CD8-positive, alpha-beta T cell (primary cell): ENCODE measurements at regions of chr17 and their contacts with region 1.

Region 1: GRCh38 chr17:20226814-20227482 is 217.8 kb downstream of the SPECC1 start:
- DNase-seq: peak; percentile 61 to 88 (median 78)
- ATAC-seq: peak; percentile 93
- H3K4me3 ChIP-seq: no peak overlapping the region
- H3K4me3 Mint-ChIP-seq: no peak overlapping the region
- H3K27ac ChIP-seq: no peak overlapping the region
- H3K27ac Mint-ChIP-seq: no peak overlapping the region
- H3K4me1 ChIP-seq: peaks cover 8% of the 10 kb centered on the region
- H3K4me1 Mint-ChIP-seq: peaks cover 15% of the 10 kb centered on the region
- H3K27me3 ChIP-seq: no peaks in the 10 kb centered on the region
- H3K27me3 Mint-ChIP-seq: peaks cover 5% of the 10 kb centered on the region
- CTCF ChIP-seq: peak; percentile 71

Region 2: DNA sequence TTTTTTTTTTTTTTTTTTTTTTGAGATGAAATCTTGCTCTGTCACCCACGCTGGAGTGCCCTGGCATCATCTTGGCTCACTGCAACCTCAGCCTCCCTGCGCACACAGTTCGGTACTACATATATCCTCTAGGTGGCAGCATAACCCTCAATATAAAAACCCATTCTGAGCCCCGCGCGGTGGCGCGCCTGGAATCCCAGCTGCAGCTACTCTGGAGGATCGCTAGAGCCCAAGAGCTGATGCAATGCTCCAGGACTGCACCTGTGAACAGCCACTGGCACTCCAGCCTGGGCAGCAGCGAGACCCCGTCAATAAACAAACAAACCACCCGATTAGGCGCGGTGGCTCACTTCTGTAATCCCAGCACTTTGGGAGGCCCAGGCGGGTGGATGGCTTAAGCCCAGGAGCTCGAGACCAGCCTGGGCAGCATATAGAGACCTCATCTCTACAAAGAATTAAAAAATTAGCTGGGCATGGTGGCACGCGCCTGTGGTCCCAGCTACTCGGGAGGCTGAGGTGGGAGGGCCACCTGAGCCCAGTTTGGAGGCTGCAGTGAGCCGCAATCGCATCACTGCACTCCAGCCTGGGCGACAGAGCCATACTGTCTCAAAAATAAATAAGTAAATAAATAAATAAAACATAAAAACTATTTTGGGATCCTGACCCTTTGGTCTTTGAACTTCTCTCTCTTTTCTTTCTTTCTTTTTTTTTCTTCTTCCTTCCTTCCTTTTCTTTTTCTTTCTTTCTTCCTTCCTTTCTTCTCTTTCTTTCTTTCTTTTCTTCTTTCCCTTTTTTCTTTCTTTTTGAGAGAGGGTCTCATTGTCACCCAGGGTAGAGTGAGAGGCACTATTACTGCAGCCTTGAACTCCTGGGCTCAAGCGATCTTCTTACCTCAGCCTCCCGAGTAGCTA is 233.9 kb before region 1 on chr17:
- CTCF ChIA-PET with region 1: interaction called, 5 read pairs
- POLR2A ChIA-PET with region 1: no interaction called
- intact Hi-C with region 1: loop called (anchors 5 to 10 kb)
- DNase-seq: peak; percentile 39 to 87 (median 76)
- ATAC-seq: peak; percentile 99
- H3K4me3 ChIP-seq: no peak overlapping the region
- H3K4me3 Mint-ChIP-seq: no peak overlapping the region
- H3K27ac ChIP-seq: no peak overlapping the region
- H3K27ac Mint-ChIP-seq: no peak overlapping the region
- H3K4me1 ChIP-seq: peaks cover 3% of the 10 kb centered on the region
- H3K4me1 Mint-ChIP-seq: peaks cover 4% of the 10 kb centered on the region
- H3K27me3 ChIP-seq: no peaks in the 10 kb centered on the region
- H3K27me3 Mint-ChIP-seq: peaks cover 5% of the 10 kb centered on the region
- CTCF ChIP-seq: peak; percentile 59

Region 3: GRCh38 chr17:20121359-20122253 is 105.3 kb before region 1 on chr17:
- CTCF ChIA-PET with region 1: interaction called, 52 read pairs
- POLR2A ChIA-PET with region 1: no interaction called
- intact Hi-C with region 1: loop called (anchors 1 kb)
- DNase-seq: peak; percentile 36 to 81 (median 71)
- ATAC-seq: peak; percentile 68
- H3K4me3 ChIP-seq: no peak overlapping the region
- H3K4me3 Mint-ChIP-seq: no peak overlapping the region
- H3K27ac ChIP-seq: no peak overlapping the region
- H3K27ac Mint-ChIP-seq: no peak overlapping the region
- H3K4me1 ChIP-seq: no peaks in the 10 kb centered on the region
- H3K4me1 Mint-ChIP-seq: peaks cover 2% of the 10 kb centered on the region
- H3K27me3 ChIP-seq: no peaks in the 10 kb centered on the region
- H3K27me3 Mint-ChIP-seq: peaks cover 2% of the 10 kb centered on the region
- CTCF ChIP-seq: peak; percentile 82

Region 4: GRCh38 chr17:20244671-20245070 is 17.7 kb after region 1 on chr17:
- CTCF ChIA-PET with region 1: interaction called, 15 read pairs
- POLR2A ChIA-PET with region 1: no interaction called
- intact Hi-C with region 1: no loop called
- DNase-seq: no peak
- ATAC-seq: no peak
- H3K4me3 ChIP-seq: no peak overlapping the region
- H3K4me3 Mint-ChIP-seq: no peak overlapping the region
- H3K27ac ChIP-seq: no peak overlapping the region
- H3K27ac Mint-ChIP-seq: no peak overlapping the region
- H3K4me1 ChIP-seq: peaks cover 30% of the 10 kb centered on the region
- H3K4me1 Mint-ChIP-seq: peaks cover 33% of the 10 kb centered on the region
- H3K27me3 ChIP-seq: no peaks in the 10 kb centered on the region
- H3K27me3 Mint-ChIP-seq: no peaks in the 10 kb centered on the region
- CTCF ChIP-seq: no peak

Region 5: DNA sequence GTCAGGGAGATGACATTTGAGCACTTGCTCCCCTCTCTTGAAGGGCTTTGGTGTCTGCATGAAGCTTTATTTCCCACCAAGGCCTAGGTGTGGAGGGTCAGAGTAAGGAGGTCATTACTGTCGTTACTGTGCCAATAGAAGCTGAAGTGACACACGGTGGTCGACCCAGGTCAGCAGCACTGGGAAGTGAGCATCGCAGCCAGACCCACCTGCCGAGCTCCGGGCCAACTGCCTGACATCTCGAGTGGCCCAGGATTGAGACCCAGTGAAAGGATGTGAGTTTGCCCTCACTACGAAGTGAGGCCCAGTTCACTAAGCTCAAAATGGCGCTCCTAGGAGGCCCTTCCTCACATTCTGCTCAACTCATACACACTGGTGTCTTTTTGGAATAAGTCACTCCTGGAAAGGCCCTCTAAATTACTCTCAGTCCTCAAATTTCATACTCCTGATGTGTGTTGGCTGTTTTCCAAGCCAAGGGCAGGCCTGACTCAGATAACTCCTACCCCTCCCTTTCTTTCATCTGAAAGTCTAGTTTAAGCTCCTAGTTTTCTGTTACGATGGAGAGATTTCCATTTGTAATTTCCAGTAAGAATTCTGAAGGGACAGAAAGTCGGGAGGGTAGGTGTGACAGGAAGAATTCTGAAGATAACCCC is 40.0 kb after region 1 on chr17:
- CTCF ChIA-PET with region 1: interaction called, 14 read pairs
- POLR2A ChIA-PET with region 1: no interaction called
- intact Hi-C with region 1: loop called in 1 of 2 experiments (anchors 2 kb)
- DNase-seq: peak in 1 of 9 experiments; percentile 17
- ATAC-seq: no peak
- H3K4me3 ChIP-seq: no peak overlapping the region
- H3K4me3 Mint-ChIP-seq: peak overlapping the region; percentile 30
- H3K27ac ChIP-seq: no peak overlapping the region
- H3K27ac Mint-ChIP-seq: peak overlapping the region; percentile 42
- H3K4me1 ChIP-seq: peaks cover 92% of the 10 kb centered on the region
- H3K4me1 Mint-ChIP-seq: peaks cover 84% of the 10 kb centered on the region
- H3K27me3 ChIP-seq: no peaks in the 10 kb centered on the region
- H3K27me3 Mint-ChIP-seq: no peaks in the 10 kb centered on the region
- CTCF ChIP-seq: no peak

Region 6: DNA sequence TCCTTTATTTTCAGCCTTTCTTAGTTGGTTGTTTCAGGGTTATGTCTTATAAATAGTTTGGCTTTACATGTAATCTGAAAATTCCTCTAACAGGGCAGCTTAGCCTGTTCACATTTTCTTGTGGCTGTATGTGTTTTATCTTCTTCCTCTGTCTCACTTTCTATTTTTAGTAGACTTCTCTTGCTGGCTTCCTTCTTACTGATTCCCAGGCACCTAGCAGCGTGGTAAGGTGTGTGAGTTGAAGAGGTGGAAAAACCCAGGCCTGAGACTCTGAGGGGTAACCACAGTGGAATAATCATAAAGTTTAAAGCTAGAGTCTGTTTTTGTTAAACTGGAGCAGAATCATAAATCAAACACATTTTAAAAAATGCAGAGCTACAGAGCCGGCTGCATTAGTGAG is 49.5 kb after region 1 on chr17:
- CTCF ChIA-PET with region 1: interaction called, 10 read pairs
- POLR2A ChIA-PET with region 1: interaction called, 4 read pairs
- intact Hi-C with region 1: loop called in 1 of 2 experiments (anchors 2 kb)
- DNase-seq: peak in 1 of 9 experiments; percentile 26
- ATAC-seq: no peak
- H3K4me3 ChIP-seq: no peak overlapping the region
- H3K4me3 Mint-ChIP-seq: peak overlapping the region; percentile 44
- H3K27ac ChIP-seq: peak overlapping the region; percentile 16 to 37
- H3K27ac Mint-ChIP-seq: peak overlapping the region; percentile 88
- H3K4me1 ChIP-seq: peaks cover 68% of the 10 kb centered on the region
- H3K4me1 Mint-ChIP-seq: peaks cover 76% of the 10 kb centered on the region
- H3K27me3 ChIP-seq: no peaks in the 10 kb centered on the region
- H3K27me3 Mint-ChIP-seq: no peaks in the 10 kb centered on the region
- CTCF ChIP-seq: no peak

Region 7: DNA sequence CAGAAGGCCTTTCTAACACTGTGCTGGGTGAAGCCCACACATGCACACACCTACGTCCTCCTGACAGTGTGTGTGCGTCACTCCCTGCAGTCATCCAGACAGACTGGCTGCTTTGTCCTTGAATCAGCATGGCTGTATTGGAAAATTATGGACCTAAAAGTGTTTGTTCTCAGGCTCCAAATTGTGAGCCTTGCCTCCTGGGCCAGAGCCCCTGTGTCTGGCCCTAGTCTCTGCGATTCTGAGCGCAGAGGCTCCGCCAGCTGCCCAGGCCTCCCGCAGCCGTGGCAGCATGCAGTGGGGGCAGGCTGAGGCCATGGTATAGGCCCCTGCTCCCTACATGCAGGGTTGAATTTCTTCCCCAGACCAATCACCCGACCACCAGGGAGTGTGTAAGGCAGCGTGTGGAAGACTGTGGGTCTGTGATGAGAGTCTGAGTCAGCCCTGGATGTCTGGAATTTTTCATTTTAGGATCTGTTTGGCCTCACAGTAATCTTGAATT is 73.5 kb after region 1 on chr17:
- CTCF ChIA-PET with region 1: no interaction called
- POLR2A ChIA-PET with region 1: no interaction called
- intact Hi-C with region 1: no loop called
- DNase-seq: no peak
- ATAC-seq: no peak
- H3K4me3 ChIP-seq: no peak overlapping the region
- H3K4me3 Mint-ChIP-seq: no peak overlapping the region
- H3K27ac ChIP-seq: no peak overlapping the region
- H3K27ac Mint-ChIP-seq: no peak overlapping the region
- H3K4me1 ChIP-seq: peaks cover 4% of the 10 kb centered on the region
- H3K4me1 Mint-ChIP-seq: peaks cover 5% of the 10 kb centered on the region
- H3K27me3 ChIP-seq: no peaks in the 10 kb centered on the region
- H3K27me3 Mint-ChIP-seq: no peaks in the 10 kb centered on the region
- CTCF ChIP-seq: no peak

Region 8: DNA sequence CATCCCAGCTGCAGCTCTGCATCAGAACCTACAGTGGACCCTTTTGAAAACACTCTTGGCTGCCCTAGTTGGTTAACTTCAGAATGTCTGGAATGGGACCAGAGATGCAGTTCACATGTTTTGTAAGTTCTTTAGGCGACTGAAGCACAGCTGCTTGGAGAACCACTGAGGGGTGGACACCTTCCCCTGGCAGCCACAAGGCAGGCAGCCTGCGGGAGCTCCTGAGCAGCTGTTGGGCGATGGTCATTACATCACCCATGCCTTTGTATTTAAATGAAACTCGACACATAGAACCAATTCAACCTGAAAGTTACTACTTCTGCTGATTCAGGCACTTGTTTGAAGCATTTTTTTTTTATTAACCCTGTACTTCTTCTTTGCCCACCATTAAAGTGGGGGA is 88.9 kb after region 1 on chr17:
- CTCF ChIA-PET with region 1: interaction called, 56 read pairs
- POLR2A ChIA-PET with region 1: interaction called, 5 read pairs
- intact Hi-C with region 1: loop called (anchors 1 kb)
- DNase-seq: no peak
- ATAC-seq: no peak
- H3K4me3 ChIP-seq: no peak overlapping the region
- H3K4me3 Mint-ChIP-seq: no peak overlapping the region
- H3K27ac ChIP-seq: no peak overlapping the region
- H3K27ac Mint-ChIP-seq: no peak overlapping the region
- H3K4me1 ChIP-seq: no peaks in the 10 kb centered on the region
- H3K4me1 Mint-ChIP-seq: no peaks in the 10 kb centered on the region
- H3K27me3 ChIP-seq: no peaks in the 10 kb centered on the region
- H3K27me3 Mint-ChIP-seq: no peaks in the 10 kb centered on the region
- CTCF ChIP-seq: no peak